Heart left ventricle (tissue), 16 donors: ENCODE measurements at regions of chr3 and their contacts with region 1.

Region 1: DNA sequence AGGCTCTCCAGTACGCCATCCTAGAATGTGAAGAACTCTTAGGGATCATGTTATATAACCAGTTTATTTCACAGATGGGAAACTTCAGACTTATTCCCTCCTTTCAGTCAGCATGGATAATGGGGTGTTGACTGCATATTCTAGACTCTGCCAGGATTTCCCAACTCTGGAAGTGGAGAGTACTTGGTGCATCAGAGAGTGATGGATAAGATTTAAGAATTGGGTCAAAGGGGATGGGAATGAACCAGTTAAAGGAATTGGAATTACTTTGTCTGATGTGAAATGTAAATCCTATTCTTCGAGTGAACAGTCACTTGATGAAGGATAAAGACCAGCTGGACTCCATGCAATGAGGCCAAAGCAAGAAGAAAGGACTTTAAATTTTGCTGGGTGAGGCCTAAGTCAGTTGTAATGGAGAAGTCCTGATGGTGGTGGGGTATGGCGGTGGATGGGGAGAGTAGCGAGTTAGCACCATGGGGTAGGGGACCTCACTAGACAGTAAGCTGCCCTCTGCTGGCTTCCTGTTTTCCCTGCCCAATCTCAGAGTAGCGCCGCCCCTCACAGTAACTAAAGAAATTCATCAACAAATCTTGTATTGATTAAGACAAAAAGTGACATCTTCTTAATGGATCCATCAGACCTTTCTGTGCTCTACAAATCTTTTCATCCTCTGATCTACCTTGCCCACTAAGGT is 7.3 kb upstream of the CACNA1D start:
- DNase-seq: no peak
- ATAC-seq: no peak
- H3K4me3 ChIP-seq: no peak overlapping the region
- H3K27ac ChIP-seq: no peak overlapping the region
- H3K4me1 ChIP-seq: no peaks in the 10 kb centered on the region
- H3K27me3 ChIP-seq: peaks cover 0 to 21% (median 0%) of the 10 kb centered on the region in 9 donors
- CTCF ChIP-seq: no peak
- POLR2A ChIP-seq: no peak

Region 2: DNA sequence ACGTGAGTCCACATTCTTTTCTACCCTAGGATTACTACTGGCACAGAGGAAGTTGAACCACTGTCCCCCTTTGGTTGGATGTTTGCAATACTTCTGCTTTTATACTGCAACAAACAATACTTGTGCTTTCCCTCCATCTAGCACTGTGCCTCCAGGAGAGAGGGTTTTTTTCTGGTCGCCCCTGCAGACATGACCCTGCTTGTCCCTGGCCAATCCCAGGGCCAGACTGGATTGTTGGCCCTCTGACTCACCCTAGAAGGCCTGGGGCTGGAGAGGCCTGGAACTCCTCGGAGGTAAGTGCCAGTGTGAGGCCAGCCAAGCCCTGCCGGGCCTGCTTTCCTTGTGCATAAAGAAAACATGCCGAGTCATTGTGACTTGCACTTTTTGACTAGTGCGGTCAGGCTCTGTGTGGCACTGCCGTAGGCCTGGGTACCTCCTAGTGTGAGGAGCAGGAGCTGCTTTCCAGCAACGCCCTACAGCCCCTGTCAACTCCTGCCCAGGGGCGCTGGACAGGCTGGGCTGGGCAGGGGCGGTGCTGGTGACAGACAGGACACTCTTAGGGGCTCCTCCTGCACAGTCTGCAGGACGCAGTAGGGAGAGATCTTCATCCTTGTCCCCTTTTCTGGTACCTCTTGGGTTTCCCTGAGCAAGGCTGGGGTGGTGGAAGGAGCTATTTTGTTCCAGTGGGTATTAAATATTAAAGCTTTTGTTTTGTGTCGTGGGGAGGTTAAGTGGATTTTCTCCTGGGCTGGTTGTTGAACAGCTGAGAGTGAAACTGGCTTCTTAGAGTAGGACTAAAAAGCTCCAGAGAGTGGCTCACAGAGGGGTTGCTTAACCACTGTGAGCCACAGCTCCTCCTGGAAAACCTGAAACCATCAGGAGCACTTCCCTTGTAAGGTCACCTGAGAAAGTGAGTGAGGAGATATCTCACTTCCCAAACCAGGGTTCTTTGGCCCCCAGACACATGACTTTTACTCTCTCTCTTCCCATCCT is 216.9 kb before region 1 on chr3:
- intact Hi-C with region 1: no loop called
- DNase-seq: peak; percentile 83 to 92 (median 85)
- ATAC-seq: peak; percentile 95 to 97 (median 95)
- H3K4me3 ChIP-seq: peak overlapping the region in 4 of 12 donors; percentile 8 to 40 (median 26)
- H3K27ac ChIP-seq: peak overlapping the region; percentile 74 to 95 (median 86)
- H3K4me1 ChIP-seq: peaks cover 0 to 37% (median 12%) of the 10 kb centered on the region in 12 donors
- H3K27me3 ChIP-seq: no peaks in the 10 kb centered on the region
- CTCF ChIP-seq: peak in 2 of 12 donors; percentile 17
- POLR2A ChIP-seq: peak in 1 of 2 donors; percentile 34

Region 3: DNA sequence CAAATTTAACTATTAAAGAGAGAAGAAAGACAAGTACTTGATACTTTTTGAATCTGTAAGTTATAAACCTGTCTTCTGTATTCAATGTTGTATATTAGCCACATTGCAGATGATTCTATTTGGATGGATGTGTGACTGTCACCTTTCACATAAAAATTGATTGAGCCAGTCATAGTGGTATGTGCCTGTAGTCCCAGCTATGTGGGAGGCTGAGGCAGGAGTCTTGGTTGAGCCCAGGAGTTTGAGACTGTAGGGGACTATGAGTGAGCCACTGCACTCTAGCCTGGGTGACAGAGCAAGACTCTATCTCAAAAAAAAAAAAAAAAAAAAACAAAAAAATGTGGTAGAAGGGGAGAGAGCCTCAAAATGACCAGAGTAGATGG is 19.6 kb after region 1 on chr3:
- intact Hi-C with region 1: loop called in 1 of 10 experiments (anchors 1 kb)
- DNase-seq: no peak
- ATAC-seq: no peak
- H3K4me3 ChIP-seq: no peak overlapping the region
- H3K27ac ChIP-seq: no peak overlapping the region
- H3K4me1 ChIP-seq: no peaks in the 10 kb centered on the region
- H3K27me3 ChIP-seq: peaks cover 0 to 43% (median 14%) of the 10 kb centered on the region in 9 donors
- CTCF ChIP-seq: no peak
- POLR2A ChIP-seq: no peak